OCI-LY7 (cell line): ENCODE measurements at regions of chr2 and their contacts with region 1.

Region 1: DNA sequence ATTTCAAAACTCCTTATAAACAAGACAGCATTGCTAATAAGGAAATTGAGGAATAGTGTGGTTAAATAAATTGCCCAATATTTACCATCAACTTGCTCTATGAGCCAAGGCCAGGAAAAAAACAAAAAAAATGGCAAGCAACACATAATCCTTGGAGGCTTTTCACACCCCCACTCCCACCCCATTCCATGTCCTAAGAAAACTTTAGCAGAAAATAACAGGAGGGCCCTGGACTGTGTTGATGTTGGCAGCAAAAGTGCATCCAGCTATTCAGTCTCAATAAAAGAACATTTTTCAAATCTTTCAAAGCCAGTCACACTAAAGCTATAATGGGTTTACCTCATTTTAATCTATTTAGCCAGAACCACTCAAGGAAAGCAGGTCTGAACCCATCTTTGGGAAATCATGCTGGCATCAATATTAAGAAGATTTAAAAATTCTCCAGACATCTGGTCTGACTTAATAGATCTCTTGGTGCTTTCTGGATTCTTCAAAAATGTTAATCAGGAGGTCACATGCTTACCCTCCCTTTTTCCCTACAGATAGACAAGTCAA is 34.6 kb upstream of the STK17B start:
- DNase-seq: no peak
- H3K4me3 ChIP-seq: no peak overlapping the region
- H3K27ac ChIP-seq: no peak overlapping the region
- H3K4me1 ChIP-seq: peaks cover 55% of the 10 kb centered on the region
- CTCF ChIP-seq: no peak

Region 2: GRCh38 chr2:196187898-196188458 is 18.0 kb before region 1 on chr2:
- CTCF ChIA-PET with region 1: no interaction called
- POLR2A ChIA-PET with region 1: interaction called, 25 read pairs
- intact Hi-C with region 1: no loop called
- DNase-seq: peak; percentile 74
- H3K4me3 ChIP-seq: peak overlapping the region; percentile 8
- H3K27ac ChIP-seq: peak overlapping the region; percentile 64
- H3K4me1 ChIP-seq: peaks cover 69% of the 10 kb centered on the region
- CTCF ChIP-seq: no peak

Region 3: GRCh38 chr2:196195302-196195701 is 10.7 kb before region 1 on chr2:
- CTCF ChIA-PET with region 1: interaction called, 5 read pairs
- POLR2A ChIA-PET with region 1: interaction called, 26 read pairs
- intact Hi-C with region 1: no loop called
- DNase-seq: no peak
- H3K4me3 ChIP-seq: peak overlapping the region; percentile 35
- H3K27ac ChIP-seq: peak overlapping the region; percentile 10
- H3K4me1 ChIP-seq: peaks cover 34% of the 10 kb centered on the region
- CTCF ChIP-seq: no peak